Heart right ventricle (tissue), 16 donors: ENCODE measurements at regions of chr17 and their contacts with region 1.

Region 1: GRCh38 chr17:65198653-65199382 is 61.6 kb downstream of the RGS9 start:
- DNase-seq: peak in 1 of 2 donors; percentile 5
- ATAC-seq: peak in 5 of 8 donors; percentile 31 to 70 (median 44)
- H3K4me3 ChIP-seq: no peak overlapping the region
- H3K27ac ChIP-seq: no peak overlapping the region
- H3K4me1 ChIP-seq: no peaks in the 10 kb centered on the region
- H3K27me3 ChIP-seq: peaks cover 0 to 7% (median 0%) of the 10 kb centered on the region in 7 donors
- CTCF ChIP-seq: peak; percentile 57 to 82 (median 78)

Region 2: DNA sequence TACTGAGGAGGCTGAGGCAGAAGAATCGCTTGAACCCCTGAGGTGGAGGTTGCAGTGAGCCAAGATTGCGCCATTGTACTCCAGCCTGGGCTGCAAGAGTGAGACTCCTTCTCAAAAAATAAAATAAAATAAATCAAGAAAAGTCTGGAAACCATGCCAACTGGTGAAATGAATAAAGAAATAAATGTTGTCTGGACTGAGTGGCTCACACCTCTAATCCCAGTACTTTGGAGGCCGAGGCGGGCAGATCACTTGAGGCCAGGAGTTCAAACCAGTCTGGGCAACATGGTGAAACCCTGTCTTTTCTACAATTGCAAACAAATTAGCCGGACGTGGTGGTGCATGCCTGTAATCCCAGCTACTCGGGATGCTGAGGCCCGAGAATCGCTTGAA is 278.8 kb before region 1 on chr17:
- intact Hi-C with region 1: loop called in 1 of 10 experiments (anchors 10 kb)
- DNase-seq: peak in 1 of 2 donors; percentile 29
- ATAC-seq: peak in 7 of 8 donors; percentile 4 to 50 (median 22)
- H3K4me3 ChIP-seq: peak overlapping the region; percentile 39 to 89 (median 68)
- H3K27ac ChIP-seq: peak overlapping the region; percentile 73 to 97 (median 93)
- H3K4me1 ChIP-seq: peaks cover 0 to 23% (median 5%) of the 10 kb centered on the region in 9 donors
- H3K27me3 ChIP-seq: no peaks in the 10 kb centered on the region
- CTCF ChIP-seq: no peak

Region 3: GRCh38 chr17:64938925-64939474 is 259.8 kb before region 1 on chr17:
- intact Hi-C with region 1: loop called in 5 of 10 experiments (anchors 5 to 10 kb)
- DNase-seq: peak; percentile 29 to 48
- ATAC-seq: peak in 6 of 8 donors; percentile 38 to 82 (median 63)
- H3K4me3 ChIP-seq: peak overlapping the region in 1 of 10 donors; percentile 20
- H3K27ac ChIP-seq: no peak overlapping the region
- H3K4me1 ChIP-seq: no peaks in the 10 kb centered on the region
- H3K27me3 ChIP-seq: no peaks in the 10 kb centered on the region
- CTCF ChIP-seq: peak in 8 of 9 donors; percentile 10 to 79 (median 50)

Region 4: DNA sequence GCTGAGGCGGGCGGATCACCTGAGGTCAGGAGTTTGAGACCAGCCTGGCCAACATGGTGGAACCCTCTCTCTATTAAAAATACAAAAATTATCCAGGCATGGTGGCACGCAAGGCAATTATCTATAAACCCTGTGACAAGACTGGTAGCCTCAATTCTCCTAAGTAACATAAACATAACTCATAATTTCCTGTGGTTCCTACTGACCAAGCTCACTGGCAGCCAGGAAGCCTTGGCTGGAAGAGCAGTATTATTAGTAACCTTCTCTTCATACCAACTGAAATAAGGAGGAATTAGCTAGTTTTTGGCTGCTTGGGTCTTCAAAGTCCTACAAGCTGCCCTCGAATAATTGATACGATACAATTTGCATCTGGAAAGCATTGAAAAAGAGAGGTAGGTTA is 247.9 kb before region 1 on chr17:
- intact Hi-C with region 1: loop called in 2 of 10 experiments (anchors 10 kb)
- DNase-seq: no peak
- ATAC-seq: no peak
- H3K4me3 ChIP-seq: no peak overlapping the region
- H3K27ac ChIP-seq: no peak overlapping the region
- H3K4me1 ChIP-seq: no peaks in the 10 kb centered on the region
- H3K27me3 ChIP-seq: no peaks in the 10 kb centered on the region
- CTCF ChIP-seq: no peak

Region 5: GRCh38 chr17:64968652-64969501 is 229.9 kb before region 1 on chr17:
- intact Hi-C with region 1: loop called in 1 of 10 experiments (anchors 10 kb)
- DNase-seq: no peak
- ATAC-seq: no peak
- H3K4me3 ChIP-seq: no peak overlapping the region
- H3K27ac ChIP-seq: peak overlapping the region in 1 of 10 donors; percentile 76
- H3K4me1 ChIP-seq: peaks cover 0 to 27% (median 10%) of the 10 kb centered on the region in 9 donors
- H3K27me3 ChIP-seq: no peaks in the 10 kb centered on the region
- CTCF ChIP-seq: no peak